Panc1 (cell line): ENCODE measurements at regions of chr6 and their contacts with region 1.

Region 1: GRCh38 chr6:27838058-27838944 is 73.9 kb downstream of the OR2B2 start:
- DNase-seq: peak; percentile 100
- ATAC-seq: peak; percentile 90
- H3K4me3 ChIP-seq: peak overlapping the region; percentile 86 to 90
- H3K27ac ChIP-seq: peak overlapping the region; percentile 100
- H3K4me1 ChIP-seq: peaks cover 17% of the 10 kb centered on the region; the same call in 1 of the 2 replicates
- H3K27me3 ChIP-seq: no peaks in the 10 kb centered on the region
- CTCF ChIP-seq: no peak

Region 2: GRCh38 chr6:27565821-27566766 is 272.2 kb before region 1 on chr6:
- CTCF ChIA-PET with region 1: no interaction called
- POLR2A ChIA-PET with region 1: no interaction called
- in situ Hi-C with region 1: no loop called
- intact Hi-C with region 1: no loop called
- DNase-seq: no peak
- ATAC-seq: no peak
- H3K4me3 ChIP-seq: no peak overlapping the region
- H3K27ac ChIP-seq: no peak overlapping the region
- H3K4me1 ChIP-seq: peaks cover 6% of the 10 kb centered on the region; the same call in 1 of the 2 replicates
- H3K27me3 ChIP-seq: no peaks in the 10 kb centered on the region; the same call in 1 of the 2 replicates
- CTCF ChIP-seq: no peak; the same call in 1 of the 2 replicates

Region 3: DNA sequence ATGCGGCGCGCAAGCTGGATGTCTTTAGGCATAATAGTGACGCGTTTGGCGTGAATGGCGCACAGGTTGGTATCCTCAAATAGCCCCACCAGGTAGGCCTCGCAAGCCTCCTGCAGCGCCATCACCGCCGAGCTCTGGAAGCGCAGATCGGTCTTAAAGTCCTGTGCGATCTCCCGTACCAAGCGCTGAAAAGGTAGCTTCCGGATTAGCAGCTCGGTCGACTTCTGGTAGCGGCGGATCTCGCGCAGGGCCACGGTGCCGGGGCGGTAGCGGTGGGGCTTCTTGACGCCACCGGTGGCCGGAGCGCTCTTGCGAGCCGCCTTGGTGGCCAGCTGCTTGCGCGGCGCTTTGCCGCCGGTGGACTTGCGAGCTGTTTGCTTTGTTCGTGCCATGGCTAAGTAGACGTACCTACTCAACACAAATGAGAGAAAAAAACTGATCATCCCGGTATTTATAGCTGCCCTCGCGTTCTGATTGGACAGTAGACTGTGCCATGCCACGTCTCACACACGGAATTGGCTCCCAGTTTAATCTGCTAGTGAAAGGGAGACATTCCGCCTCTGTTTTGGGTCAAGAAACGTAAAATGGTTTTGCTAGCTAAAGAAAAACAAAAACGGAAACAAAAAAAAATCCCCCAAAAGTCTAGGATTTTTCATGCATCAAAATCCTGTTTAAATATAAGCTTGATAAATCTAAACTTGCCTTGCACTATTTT is 33.8 kb after region 1 on chr6:
- CTCF ChIA-PET with region 1: no interaction called
- POLR2A ChIA-PET with region 1: interaction called, 90 read pairs
- in situ Hi-C with region 1: no loop called
- intact Hi-C with region 1: loop called (anchors 2 kb)
- DNase-seq: peak; percentile 99
- ATAC-seq: peak; percentile 74
- H3K4me3 ChIP-seq: peak overlapping the region; percentile 60 to 66
- H3K27ac ChIP-seq: peak overlapping the region; percentile 98
- H3K4me1 ChIP-seq: peaks cover 33% of the 10 kb centered on the region
- H3K27me3 ChIP-seq: no peaks in the 10 kb centered on the region
- CTCF ChIP-seq: peak; percentile 62

Region 4: DNA sequence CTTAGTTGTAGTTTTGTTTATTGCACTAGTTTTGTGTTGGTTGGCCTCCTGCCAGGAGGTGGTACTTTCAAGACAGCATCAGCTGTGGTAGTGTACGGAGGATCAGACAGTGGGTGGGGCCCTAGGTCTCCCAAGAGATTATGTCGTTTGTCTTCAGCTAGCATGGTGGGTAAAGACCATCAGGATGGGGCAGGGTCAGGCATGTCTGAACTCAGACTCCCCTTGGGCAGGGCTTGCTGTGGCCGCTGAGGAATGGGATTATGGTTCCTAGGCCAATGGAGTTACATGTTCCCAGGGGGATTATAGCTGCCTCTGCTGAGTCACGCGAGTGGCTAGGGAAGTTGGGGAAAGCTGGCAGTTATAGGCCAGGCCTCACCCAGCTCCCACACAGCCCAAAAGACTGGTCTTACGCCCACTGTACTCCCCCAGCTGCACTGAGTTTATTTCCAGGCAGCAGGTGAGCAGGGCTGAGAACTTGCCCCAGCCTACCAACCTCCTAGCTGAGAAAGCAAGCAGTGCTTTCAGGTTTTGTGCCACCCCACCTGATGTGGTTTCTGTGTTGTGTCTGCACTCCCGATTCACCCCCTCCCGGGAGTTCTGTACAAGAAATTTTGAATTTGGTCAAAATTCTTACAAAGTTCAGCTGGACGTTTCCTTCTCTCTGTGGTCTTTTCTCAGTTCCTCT is 473.0 kb after region 1 on chr6:
- CTCF ChIA-PET with region 1: no interaction called
- POLR2A ChIA-PET with region 1: no interaction called
- in situ Hi-C with region 1: no loop called
- intact Hi-C with region 1: no loop called
- DNase-seq: no peak
- ATAC-seq: no peak
- H3K4me3 ChIP-seq: no peak overlapping the region
- H3K27ac ChIP-seq: no peak overlapping the region
- H3K4me1 ChIP-seq: no peaks in the 10 kb centered on the region
- H3K27me3 ChIP-seq: no peaks in the 10 kb centered on the region
- CTCF ChIP-seq: no peak